B cell (primary cell): ENCODE measurements at regions of chr3 and their contacts with region 1.

Region 1: DNA sequence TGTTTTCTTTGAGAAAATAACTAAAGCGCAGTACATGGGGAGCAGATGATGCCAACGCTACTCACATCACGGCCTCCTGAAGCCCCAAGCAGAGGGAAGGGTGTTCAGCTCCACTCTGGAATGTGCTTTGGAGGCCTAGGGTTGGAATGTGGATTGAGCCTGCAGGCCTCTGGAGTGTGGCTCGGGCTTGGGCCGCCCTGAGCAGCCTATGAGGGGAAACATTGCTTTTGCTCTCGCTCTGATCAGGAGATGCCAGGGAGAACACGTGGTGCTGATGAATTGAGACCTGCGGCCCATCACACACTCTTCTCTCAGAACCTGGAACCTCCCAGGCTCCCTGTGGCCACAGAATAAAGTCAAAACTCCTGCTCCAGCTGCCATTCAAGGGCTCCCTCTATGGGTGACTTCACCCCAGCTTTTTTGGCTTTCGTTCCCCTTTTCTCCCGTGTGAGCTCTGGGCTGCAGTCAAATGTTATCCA is 23.3 kb downstream of the CCDC13 start:
- DNase-seq: peak; percentile 20
- ATAC-seq: peak; percentile 10
- H3K4me3 ChIP-seq: no peak overlapping the region
- H3K4me3 Mint-ChIP-seq: no peak overlapping the region
- H3K27ac ChIP-seq: no peak overlapping the region
- H3K27ac Mint-ChIP-seq: no peak overlapping the region
- H3K4me1 ChIP-seq: peaks cover 0 to 3% of the 10 kb centered on the region in 2 donors
- H3K4me1 Mint-ChIP-seq: peaks cover 9% of the 10 kb centered on the region
- H3K27me3 ChIP-seq: no peaks in the 10 kb centered on the region
- H3K27me3 Mint-ChIP-seq: no peaks in the 10 kb centered on the region
- CTCF ChIP-seq: peak; percentile 14

Region 2: DNA sequence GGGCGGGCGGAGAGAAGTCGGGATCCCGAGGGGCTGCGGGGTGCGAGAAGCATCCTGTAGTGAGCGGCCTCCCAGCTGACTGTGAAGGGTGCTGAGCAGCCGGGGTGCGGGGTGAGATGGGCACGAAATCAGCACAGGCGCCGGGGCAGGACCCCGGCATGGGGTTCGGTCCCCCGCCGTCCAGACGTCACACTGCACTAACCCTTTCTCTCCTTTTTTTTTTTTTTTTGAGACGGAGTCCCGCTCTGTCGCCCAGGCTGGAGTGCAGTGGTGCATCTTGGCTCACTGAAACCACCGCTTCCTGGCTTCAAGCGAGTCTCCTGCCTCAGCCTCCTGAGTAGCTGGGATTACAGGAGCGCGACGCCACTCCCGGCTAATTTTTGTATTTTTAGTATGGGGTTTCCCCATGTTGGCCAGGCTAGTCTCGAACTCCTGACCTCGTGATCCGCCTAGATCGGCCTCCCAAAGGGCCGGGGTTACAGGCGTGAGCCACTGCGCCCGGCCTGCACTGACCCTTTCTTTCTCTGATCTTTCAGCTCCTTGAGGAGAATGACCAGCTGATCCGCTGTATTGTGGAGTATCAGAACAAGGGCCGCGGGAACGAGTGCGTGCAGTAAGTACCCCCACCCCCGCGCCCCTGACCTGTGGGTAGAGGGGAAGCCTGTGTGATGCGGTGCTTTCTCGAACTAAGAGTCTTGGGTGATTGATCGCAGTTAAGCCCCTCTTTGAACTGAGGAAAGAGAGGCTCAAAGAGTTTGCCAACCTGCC is 158.6 kb before region 1 on chr3:
- CTCF ChIA-PET with region 1: no interaction called
- POLR2A ChIA-PET with region 1: no interaction called
- intact Hi-C with region 1: no loop called
- DNase-seq: no peak
- ATAC-seq: peak; percentile 4
- H3K4me3 ChIP-seq: peak overlapping the region; percentile 41 to 72 (median 67)
- H3K4me3 Mint-ChIP-seq: peak overlapping the region; percentile 97
- H3K27ac ChIP-seq: peak overlapping the region; percentile 73 to 78
- H3K27ac Mint-ChIP-seq: peak overlapping the region; percentile 98
- H3K4me1 ChIP-seq: peaks cover 14 to 15% of the 10 kb centered on the region in 2 donors
- H3K4me1 Mint-ChIP-seq: peaks cover 33% of the 10 kb centered on the region
- H3K27me3 ChIP-seq: no peaks in the 10 kb centered on the region
- H3K27me3 Mint-ChIP-seq: no peaks in the 10 kb centered on the region
- CTCF ChIP-seq: no peak

Region 3: GRCh38 chr3:42732829-42733459 is 16.8 kb before region 1 on chr3:
- CTCF ChIA-PET with region 1: interaction called, 13 read pairs
- POLR2A ChIA-PET with region 1: no interaction called
- intact Hi-C with region 1: no loop called
- DNase-seq: no peak
- ATAC-seq: no peak
- H3K4me3 ChIP-seq: no peak overlapping the region
- H3K4me3 Mint-ChIP-seq: no peak overlapping the region
- H3K27ac ChIP-seq: no peak overlapping the region
- H3K27ac Mint-ChIP-seq: no peak overlapping the region
- H3K4me1 ChIP-seq: no peaks in the 10 kb centered on the region
- H3K4me1 Mint-ChIP-seq: no peaks in the 10 kb centered on the region
- H3K27me3 ChIP-seq: no peaks in the 10 kb centered on the region
- H3K27me3 Mint-ChIP-seq: no peaks in the 10 kb centered on the region
- CTCF ChIP-seq: no peak